CD8-positive, alpha-beta memory T cell (primary cell): ENCODE measurements at regions of chr6 and their contacts with region 1.

Region 1: GRCh38 chr6:32203426-32204247 is 11.2 kb upstream of the GPSM3 start:
- DNase-seq: no peak
- H3K4me3 ChIP-seq: no peak overlapping the region
- H3K4me3 Mint-ChIP-seq: no peak overlapping the region
- H3K27ac ChIP-seq: no peak overlapping the region
- H3K27ac Mint-ChIP-seq: no peak overlapping the region
- H3K4me1 ChIP-seq: no peaks in the 10 kb centered on the region
- H3K4me1 Mint-ChIP-seq: no peaks in the 10 kb centered on the region
- H3K27me3 ChIP-seq: no peaks in the 10 kb centered on the region
- H3K27me3 Mint-ChIP-seq: peaks cover 3 to 11% of the 10 kb centered on the region in 2 donors

Region 2: DNA sequence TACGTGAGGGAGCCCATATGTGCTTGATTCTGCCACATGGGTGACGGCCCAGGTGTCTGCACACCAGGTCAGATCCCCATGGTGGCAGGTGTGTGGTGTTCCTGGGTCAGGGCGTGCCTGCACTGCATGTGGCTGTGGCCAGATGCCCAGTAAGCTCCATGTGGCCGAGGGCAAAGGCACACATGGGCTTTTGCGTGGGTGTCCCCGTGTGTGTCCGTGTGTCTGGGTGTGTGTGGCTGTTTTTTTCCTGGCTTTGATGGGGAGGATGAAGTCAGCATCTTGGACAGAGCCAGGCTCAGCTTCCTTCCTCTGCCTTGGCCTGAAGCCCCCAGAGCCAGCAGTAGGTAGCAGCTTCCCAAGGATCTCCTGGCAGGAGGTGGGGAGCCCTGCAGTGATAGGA is 93.0 kb before region 1 on chr6:
- CTCF ChIA-PET with region 1: no interaction called
- POLR2A ChIA-PET with region 1: interaction called, 10 read pairs
- DNase-seq: no peak
- H3K4me3 ChIP-seq: no peak overlapping the region
- H3K4me3 Mint-ChIP-seq: peak overlapping the region in 1 of 7 donors; percentile 54
- H3K27ac ChIP-seq: no peak overlapping the region
- H3K27ac Mint-ChIP-seq: no peak overlapping the region
- H3K4me1 ChIP-seq: peaks cover 14% of the 10 kb centered on the region
- H3K4me1 Mint-ChIP-seq: peaks cover 17 to 27% (median 18%) of the 10 kb centered on the region in 3 donors
- H3K27me3 ChIP-seq: peaks cover 3% of the 10 kb centered on the region
- H3K27me3 Mint-ChIP-seq: peaks cover 9 to 26% of the 10 kb centered on the region in 2 donors